ENCODE measurements at regions of chr3 and their contacts with region 1.

Region 1: DNA sequence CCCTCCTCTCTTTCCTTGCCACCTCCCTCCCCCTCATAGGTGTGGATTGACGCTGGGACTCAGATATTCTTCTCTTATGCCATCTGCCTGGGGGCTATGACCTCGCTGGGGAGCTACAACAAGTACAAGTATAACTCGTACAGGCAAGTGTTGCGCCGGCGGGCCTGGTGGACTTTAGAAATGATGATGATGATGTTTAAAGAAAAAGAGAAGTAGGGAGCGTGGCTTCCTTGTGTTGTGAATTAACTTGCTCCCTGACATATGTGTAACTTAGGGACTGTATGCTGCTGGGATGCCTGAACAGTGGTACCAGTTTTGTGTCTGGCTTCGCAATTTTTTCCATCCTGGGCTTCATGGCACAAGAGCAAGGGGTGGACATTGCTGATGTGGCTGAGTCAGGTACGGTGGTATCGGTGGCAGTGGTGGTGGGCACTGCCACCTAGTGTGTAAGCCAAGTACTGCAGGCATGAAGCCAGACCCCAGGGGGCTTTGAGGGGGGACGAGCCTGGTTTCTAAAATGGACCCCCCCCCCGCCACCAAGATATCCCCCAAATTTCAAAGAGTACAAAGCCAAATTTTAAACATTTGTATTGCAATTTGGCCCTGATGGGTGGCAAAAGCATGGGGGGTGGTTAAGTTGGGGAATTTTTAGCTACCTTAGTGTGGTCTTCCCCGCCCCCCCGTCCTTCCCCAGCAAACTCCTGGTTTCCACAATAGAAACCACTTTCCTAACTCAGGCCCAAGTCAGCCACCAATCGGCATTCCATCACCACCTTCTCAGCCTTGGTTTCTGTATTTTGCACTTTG is 65.6 kb downstream of the SLC6A6 start:
- DNase-seq: peak in 5 of 10 donors; percentile 40 to 67 (median 42)
- H3K4me3 ChIP-seq: no peak overlapping the region
- H3K27ac ChIP-seq: no peak overlapping the region
- H3K27me3 ChIP-seq: no peaks in the 10 kb centered on the region
- CTCF ChIP-seq: peak; percentile 68 to 96 (median 88)

Region 2: GRCh38 chr3:13895155-13896105 is 572.6 kb before region 1 on chr3:
- intact Hi-C with region 1: loop called in 1 of 2 experiments (anchors 5 kb)
- DNase-seq: peak; percentile 75 to 96 (median 91)
- H3K4me3 ChIP-seq: peak overlapping the region; percentile 40 to 90 (median 75)
- H3K27ac ChIP-seq: peak overlapping the region in 46 of 59 donors; percentile 9 to 85 (median 46)
- H3K27me3 ChIP-seq: no peaks in the 10 kb centered on the region
- CTCF ChIP-seq: peak in 17 of 56 donors; percentile 8 to 54 (median 21)

Region 3: GRCh38 chr3:14203521-14204079 is 264.4 kb before region 1 on chr3:
- intact Hi-C with region 1: loop called (anchors 1 to 5 kb)
- DNase-seq: peak in 9 of 10 donors; percentile 58 to 84 (median 72)
- H3K4me3 ChIP-seq: no peak overlapping the region
- H3K27ac ChIP-seq: peak overlapping the region in 15 of 59 donors; percentile 6 to 66 (median 31)
- H3K27me3 ChIP-seq: no peaks in the 10 kb centered on the region
- CTCF ChIP-seq: peak; percentile 79 to 97 (median 91)

Region 4: DNA sequence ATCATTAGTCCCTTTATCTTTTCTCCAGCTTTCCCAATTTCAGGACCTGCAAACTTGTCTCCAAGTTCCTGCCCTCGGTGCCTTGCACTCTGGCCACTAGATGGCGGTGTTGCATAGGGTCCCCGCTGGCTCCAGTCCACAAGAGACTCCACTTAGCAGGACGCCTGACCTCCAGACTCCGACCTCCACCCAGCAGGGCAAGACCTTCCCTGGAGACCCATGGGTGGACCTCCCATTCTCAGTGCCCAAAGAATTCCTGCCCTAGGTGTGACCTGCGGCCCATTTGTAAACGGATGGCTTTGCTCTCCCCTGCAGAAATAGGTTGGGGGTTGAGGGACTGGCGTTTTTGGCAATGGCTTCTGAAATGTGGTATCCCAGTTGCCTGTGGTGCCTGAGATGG is 206.8 kb before region 1 on chr3:
- intact Hi-C with region 1: loop called (anchors 2 kb)
- DNase-seq: peak; percentile 76 to 92 (median 86)
- H3K4me3 ChIP-seq: no peak overlapping the region
- H3K27ac ChIP-seq: no peak overlapping the region
- H3K27me3 ChIP-seq: no peaks in the 10 kb centered on the region
- CTCF ChIP-seq: peak; percentile 88 to 99 (median 97)

Region 5: GRCh38 chr3:14431892-14432834 is 35.9 kb before region 1 on chr3:
- intact Hi-C with region 1: loop called (anchors 1 to 2 kb)
- DNase-seq: peak in 9 of 10 donors; percentile 66 to 97 (median 87)
- H3K4me3 ChIP-seq: peak overlapping the region in 7 of 59 donors; percentile 7 to 31 (median 15)
- H3K27ac ChIP-seq: peak overlapping the region; percentile 35 to 96 (median 88)
- H3K27me3 ChIP-seq: no peaks in the 10 kb centered on the region
- CTCF ChIP-seq: peak in 4 of 56 donors; percentile 8 to 23 (median 14)

Region 6: GRCh38 chr3:14514323-14514720 is 46.3 kb after region 1 on chr3:
- intact Hi-C with region 1: no loop called
- DNase-seq: peak in 1 of 10 donors; percentile 35
- H3K4me3 ChIP-seq: no peak overlapping the region
- H3K27ac ChIP-seq: no peak overlapping the region
- H3K27me3 ChIP-seq: no peaks in the 10 kb centered on the region
- CTCF ChIP-seq: no peak